HEK293 (cell line): ENCODE measurements at regions of chrX and their contacts with region 1.

Region 1: GRCh38 chrX:130902783-130903613 is at the start of gene ENOX2:
- H3K4me3 ChIP-seq: peak within 1 kb of the TSS; percentile 75
- H3K27ac ChIP-seq: peak within 1 kb of the TSS; percentile 87
- H3K4me1 ChIP-seq: peaks cover 3% of the 10 kb centered on the region; the same call in 1 of the 2 replicates
- CTCF ChIP-seq: peak; percentile 34; the same call in 1 of the 2 replicates

Region 2: GRCh38 chrX:130778773-130779172 is 124.2 kb before region 1 on chrX:
- CTCF ChIA-PET with region 1: no interaction called
- POLR2A ChIA-PET with region 1: no interaction called
- H3K4me3 ChIP-seq: no peak overlapping the region
- H3K27ac ChIP-seq: no peak overlapping the region
- H3K4me1 ChIP-seq: no peaks in the 10 kb centered on the region
- CTCF ChIP-seq: no peak

Region 3: DNA sequence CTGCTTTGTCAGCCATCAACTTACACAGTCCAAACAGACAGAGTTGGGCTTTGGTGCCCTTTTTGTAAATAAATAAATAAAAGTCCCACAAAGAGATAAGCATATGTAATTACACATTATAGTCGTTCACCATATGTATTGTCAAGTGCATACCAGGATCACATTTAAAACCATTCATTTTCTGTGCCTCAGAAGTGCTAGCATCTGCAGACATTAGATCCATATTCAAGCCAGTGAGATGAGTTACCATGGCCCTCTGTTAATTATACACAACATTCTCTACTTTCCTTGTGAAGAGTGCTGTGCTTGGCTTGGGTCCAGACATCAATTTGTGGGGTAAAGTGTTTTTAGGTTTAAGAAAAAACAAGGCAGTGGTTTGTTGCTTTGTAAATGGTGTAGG is 76.7 kb before region 1 on chrX:
- CTCF ChIA-PET with region 1: no interaction called
- POLR2A ChIA-PET with region 1: interaction called, 10 read pairs
- H3K4me3 ChIP-seq: no peak overlapping the region
- H3K27ac ChIP-seq: no peak overlapping the region
- H3K4me1 ChIP-seq: peaks cover 14% of the 10 kb centered on the region
- CTCF ChIP-seq: no peak

Region 4: GRCh38 chrX:130952266-130953043 is 49.5 kb after region 1 on chrX:
- CTCF ChIA-PET with region 1: no interaction called
- POLR2A ChIA-PET with region 1: no interaction called
- H3K4me3 ChIP-seq: no peak overlapping the region
- H3K27ac ChIP-seq: no peak overlapping the region
- H3K4me1 ChIP-seq: no peaks in the 10 kb centered on the region
- CTCF ChIP-seq: no peak